Activated CD8-positive, alpha-beta T cell treated with anti-CD3 and anti-CD28 coated beads for 36 hours (primary cell): ENCODE measurements at regions of chr11 and their contacts with region 1.

Region 1: DNA sequence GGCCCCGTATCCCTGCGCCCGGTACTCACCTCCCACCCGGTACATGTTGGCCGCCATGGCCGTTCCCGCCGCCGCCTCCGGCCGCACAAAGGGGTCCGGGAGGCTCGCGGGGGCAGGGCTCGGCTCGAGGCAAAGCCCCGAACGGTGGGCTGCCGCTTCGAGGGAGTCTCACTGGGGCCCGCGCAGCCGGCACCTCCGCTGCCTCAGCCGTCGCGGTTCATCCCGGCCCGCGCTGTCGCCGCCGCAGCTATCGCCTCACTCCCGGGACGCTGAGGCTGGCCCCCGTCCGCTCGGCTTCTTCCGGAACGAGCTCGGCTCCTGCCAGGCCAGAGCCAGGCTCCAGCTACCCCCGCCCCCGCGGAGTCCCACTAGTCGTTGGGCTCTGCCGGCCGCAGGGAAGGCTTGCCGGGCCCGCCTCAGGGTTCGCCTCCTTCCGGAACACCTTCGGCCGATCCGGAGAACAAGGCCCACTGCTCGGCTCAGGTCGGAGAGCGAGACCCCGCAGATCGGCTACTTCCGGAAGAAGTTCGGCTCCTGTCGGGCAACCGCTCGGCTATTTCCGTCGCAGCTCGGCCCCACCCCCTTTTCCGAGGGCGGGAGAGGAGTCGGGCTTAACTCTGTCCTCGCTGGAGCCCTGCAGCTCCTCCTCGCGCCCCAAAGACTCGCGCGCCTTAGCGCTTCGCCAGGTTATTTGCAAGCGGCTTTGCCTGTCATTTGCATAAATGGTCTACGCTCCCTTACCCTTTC is at the start of gene MTA2:
- DNase-seq: peak; percentile 99
- ATAC-seq: peak; percentile 89
- H3K4me3 Mint-ChIP-seq: peak within 1 kb of the TSS; percentile 86
- H3K27ac Mint-ChIP-seq: peak within 1 kb of the TSS; percentile 95
- H3K4me1 Mint-ChIP-seq: peaks cover 43% of the 10 kb centered on the region
- H3K27me3 Mint-ChIP-seq: no peaks in the 10 kb centered on the region
- CTCF ChIP-seq: no peak
- total RNA-seq, gene MTA2: 159 to 164 TPM

Region 2: DNA sequence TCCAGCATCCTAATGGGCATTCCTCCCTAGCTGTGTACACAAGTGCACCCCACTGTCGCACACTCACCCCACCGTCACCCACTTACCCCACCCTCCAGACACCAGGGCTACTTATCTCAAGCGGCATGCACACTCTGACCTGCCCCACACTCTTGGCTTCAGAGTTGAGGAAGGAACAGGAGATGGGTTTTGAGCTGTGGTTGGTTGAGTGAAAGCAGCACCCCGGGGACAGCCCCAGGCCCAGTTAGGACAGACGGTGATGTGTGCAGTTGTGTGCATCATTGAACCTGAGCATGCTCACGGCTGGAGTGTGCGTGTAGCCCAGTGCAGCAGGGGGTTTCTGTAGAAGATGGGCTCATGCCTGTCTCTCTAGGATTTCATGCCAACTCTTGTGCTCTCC is 87.4 kb before region 1 on chr11:
- CTCF ChIA-PET with region 1: no interaction called
- POLR2A ChIA-PET with region 1: no interaction called
- intact Hi-C with region 1: no loop called
- DNase-seq: no peak
- ATAC-seq: no peak
- H3K4me3 Mint-ChIP-seq: no peak overlapping the region
- H3K27ac Mint-ChIP-seq: no peak overlapping the region
- H3K4me1 Mint-ChIP-seq: peaks cover 6% of the 10 kb centered on the region
- H3K27me3 Mint-ChIP-seq: no peaks in the 10 kb centered on the region
- CTCF ChIP-seq: no peak

Region 3: DNA sequence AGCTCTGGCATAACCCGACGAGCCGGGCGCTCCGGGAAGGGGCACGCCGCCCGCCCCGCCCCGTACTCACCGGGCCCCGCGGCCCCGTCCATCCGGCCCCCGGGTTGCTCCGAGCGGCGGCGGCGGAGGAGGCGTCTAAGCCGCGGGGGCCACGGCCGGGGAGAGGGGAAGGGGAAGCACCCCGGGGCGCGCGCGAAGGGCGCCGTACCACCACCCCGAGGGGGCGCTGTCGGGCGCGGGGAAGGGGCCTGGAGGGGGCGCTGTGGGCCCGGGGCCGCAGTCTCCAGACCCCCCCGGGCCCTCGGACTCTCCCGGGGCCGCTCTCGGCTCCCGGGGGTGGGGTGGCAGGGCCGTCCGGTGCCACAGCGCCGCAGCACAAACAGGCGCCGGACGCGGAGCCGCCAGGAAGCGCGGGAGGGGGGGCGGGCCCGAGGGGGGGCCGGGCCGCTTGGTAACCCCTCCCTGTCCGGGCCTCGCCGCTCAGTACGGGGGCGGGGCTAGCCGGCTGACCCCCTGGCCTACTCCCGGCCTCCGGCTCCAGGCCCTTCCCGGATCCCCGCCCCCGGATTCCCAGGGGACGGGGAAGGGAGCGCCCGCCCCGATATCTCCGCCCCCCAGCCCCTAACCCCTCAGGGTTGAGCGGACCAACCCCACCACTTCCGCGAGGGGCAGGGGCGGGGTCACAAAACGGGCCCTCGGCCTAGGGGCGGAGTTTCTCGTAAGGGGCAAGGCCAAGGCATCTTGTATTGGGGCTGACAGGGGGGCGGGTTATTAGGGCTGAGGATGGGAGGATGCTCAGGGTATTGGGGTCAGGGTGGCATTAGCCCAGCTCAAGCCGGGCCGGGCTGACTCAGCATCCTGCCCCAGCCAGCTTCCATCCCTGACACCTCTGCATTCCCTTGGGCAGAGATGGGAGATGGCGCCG is 11.1 kb after region 1 on chr11 and contains the starts of genes EML3 and ROM1:
- CTCF ChIA-PET with region 1: interaction called, 24 read pairs
- POLR2A ChIA-PET with region 1: interaction called, 87 read pairs
- intact Hi-C with region 1: no loop called
- DNase-seq: peak; percentile 92
- ATAC-seq: peak; percentile 80
- H3K4me3 Mint-ChIP-seq: peak within 1 kb of the TSS; percentile 96
- H3K27ac Mint-ChIP-seq: peak within 1 kb of the TSS; percentile 97
- H3K4me1 Mint-ChIP-seq: peaks cover 52% of the 10 kb centered on the region
- H3K27me3 Mint-ChIP-seq: no peaks in the 10 kb centered on the region
- CTCF ChIP-seq: peak; percentile 99
- total RNA-seq, gene EML3: 115 to 120 TPM
- total RNA-seq, gene ROM1: 0.79 to 1.1 TPM

Region 4: DNA sequence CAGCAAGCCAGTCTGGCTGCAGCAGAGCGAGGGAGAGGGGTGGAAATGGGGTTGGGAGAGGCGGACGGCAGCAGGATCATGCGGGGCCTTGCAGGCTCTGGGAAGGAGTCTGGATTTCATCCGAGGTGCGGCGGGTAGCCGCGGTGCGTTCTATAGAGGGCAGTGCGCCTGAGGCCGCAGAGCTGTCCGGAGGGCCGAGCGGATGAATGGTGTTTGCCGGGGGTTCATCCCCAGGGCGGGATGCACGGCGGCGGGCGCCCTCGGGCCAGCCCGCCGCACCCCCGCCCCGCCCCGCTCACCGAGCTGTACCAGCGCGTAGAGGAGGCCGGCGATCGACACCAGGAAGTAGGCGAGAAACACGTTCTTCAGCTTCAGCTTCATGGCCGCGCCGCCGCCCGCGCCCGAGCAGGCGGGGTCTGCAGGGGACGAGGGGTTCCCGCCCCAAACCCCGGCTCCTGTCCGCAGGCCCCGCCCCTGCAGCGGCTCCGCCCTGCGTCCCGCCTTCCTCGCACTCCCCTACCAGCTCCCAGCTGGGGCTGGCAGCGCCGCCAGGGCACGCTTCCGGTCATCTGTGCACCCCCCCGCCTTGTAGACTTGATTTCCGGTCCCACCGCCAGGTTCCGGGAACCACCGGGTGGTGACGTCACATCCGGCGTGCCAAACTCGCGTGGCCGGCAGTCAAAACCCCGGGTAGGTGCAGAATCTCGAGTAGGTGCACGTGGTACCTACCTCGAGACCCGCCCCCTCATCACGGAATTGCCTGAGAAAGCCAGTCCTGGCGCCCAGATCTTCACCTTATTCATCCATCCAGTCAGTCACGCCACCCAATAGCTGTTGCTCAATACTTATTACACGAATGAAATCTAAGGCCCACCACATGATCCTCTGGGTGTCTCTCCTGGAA is 20.3 kb after region 1 on chr11 and contains the start of gene B3GAT3:
- CTCF ChIA-PET with region 1: interaction called, 5 read pairs
- POLR2A ChIA-PET with region 1: interaction called, 18 read pairs
- intact Hi-C with region 1: no loop called
- DNase-seq: peak; percentile 98
- ATAC-seq: peak; percentile 94
- H3K4me3 Mint-ChIP-seq: peak within 1 kb of the TSS; percentile 88
- H3K27ac Mint-ChIP-seq: peak within 1 kb of the TSS; percentile 91
- H3K4me1 Mint-ChIP-seq: peaks cover 24% of the 10 kb centered on the region
- H3K27me3 Mint-ChIP-seq: no peaks in the 10 kb centered on the region
- CTCF ChIP-seq: no peak
- total RNA-seq, gene B3GAT3: 59.1 to 61.4 TPM

Region 5: DNA sequence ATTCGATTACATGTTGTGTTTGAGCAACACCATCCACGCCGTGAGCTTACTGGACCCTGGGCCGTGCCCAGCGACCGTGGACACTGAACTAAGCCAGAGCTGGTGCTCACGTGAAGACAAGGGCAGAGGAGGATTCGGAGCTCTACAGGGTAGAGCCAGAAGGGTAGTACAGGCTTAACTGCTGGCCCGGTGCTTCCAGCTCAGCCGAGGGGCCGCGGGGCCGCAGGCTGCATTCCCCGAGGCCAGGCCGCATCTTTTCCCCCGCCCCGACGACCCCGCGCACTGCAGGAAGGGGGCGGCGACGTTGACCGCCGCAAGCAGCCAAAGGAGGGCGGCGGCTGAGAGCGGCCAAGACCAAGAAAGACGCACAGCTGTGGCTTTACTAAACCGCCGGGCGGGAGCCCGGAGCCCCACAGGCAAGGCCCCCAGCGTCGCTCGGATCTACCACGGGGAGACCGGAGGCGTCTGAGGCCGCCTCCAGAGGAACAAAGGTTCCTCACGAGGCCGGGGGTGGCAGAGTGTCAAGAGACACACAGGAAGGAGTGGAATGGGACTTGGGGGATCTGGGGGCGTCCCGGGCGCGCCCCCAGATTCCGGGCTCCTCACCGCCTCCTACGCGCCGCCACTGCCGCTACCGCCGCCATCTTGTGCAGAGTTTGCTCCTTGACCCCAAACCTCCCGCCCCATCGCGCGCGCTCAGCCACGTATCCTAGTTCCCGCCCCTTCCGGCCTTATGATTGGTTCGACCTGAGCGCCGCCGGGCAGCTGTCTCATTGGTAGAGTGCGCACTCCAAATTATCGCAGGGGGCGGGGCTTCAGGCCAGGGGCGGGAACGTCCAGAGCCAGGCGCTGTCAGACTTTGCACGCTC is 44.6 kb after region 1 on chr11 and contains the start of gene GANAB:
- CTCF ChIA-PET with region 1: no interaction called
- POLR2A ChIA-PET with region 1: interaction called, 14 read pairs
- intact Hi-C with region 1: no loop called
- DNase-seq: peak; percentile 100
- ATAC-seq: peak; percentile 98
- H3K4me3 Mint-ChIP-seq: peak within 1 kb of the TSS; percentile 100
- H3K27ac Mint-ChIP-seq: peak within 1 kb of the TSS; percentile 99
- H3K4me1 Mint-ChIP-seq: peaks cover 30% of the 10 kb centered on the region
- H3K27me3 Mint-ChIP-seq: no peaks in the 10 kb centered on the region
- CTCF ChIP-seq: no peak
- total RNA-seq, gene GANAB: 205 to 217 TPM

Region 6: DNA sequence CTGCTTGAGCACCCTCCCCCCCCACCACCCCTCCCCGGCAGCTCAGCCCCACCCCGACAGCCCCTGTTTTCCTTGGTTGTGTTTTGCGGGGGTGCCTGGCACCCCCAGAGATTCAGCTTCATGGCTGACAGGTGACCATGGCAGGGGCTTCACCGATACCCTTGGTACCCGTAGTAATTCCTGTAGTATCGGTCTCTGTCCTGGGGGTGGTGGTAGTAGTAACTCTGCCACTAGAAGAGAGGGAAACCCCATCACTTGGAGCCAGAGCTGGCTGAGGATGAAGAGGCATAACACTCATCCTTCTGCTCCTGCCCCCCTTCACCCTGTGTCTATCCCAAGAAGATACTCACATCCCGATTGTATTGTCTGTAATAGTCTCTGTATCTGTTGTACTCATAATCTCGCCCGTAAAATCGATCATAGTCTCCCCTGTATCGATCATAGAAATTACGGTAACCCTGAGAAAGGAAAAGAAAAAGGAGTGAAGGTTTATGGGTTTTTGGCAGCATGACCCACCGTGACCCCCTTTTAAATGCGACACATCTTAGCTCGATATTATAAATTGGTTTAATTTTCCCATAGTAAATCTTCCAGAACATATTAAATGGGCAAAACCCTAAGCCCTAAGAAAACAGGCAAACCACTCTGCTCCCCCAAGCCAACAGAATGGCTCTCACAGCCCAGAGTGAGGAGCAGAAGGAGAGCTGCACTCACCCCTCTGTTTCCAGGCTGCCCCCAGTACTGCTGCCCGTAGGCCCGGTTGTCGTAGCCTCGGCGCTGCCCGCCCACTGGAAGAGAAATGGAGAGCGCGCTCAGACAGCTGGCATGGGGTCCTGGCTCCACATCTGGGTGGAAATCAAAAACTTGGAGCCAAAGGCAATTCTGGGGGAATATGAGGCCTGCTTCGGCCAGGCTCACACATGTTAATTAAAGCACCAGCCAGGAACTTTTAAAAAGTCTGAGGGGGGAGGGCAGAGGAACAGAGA is 113.9 kb after region 1 on chr11:
- CTCF ChIA-PET with region 1: no interaction called
- POLR2A ChIA-PET with region 1: no interaction called
- intact Hi-C with region 1: no loop called
- DNase-seq: no peak
- ATAC-seq: no peak
- H3K4me3 Mint-ChIP-seq: no peak overlapping the region
- H3K27ac Mint-ChIP-seq: peak overlapping the region; percentile 44
- H3K4me1 Mint-ChIP-seq: peaks cover 55% of the 10 kb centered on the region
- H3K27me3 Mint-ChIP-seq: no peaks in the 10 kb centered on the region
- CTCF ChIP-seq: no peak